ENCODE measurements at regions of chr20 and their contacts with region 1.

Region 1: GRCh38 chr20:45300961-45301360 is 5.7 kb upstream of the RBPJL start:
- DNase-seq: peak; percentile 13
- H3K4me3 ChIP-seq: no peak overlapping the region
- H3K27ac ChIP-seq: no peak overlapping the region
- H3K4me1 ChIP-seq: no peaks in the 10 kb centered on the region
- H3K27me3 ChIP-seq: peaks cover 3 to 12% of the 10 kb centered on the region in 2 experiments
- CTCF ChIP-seq: peak; percentile 33 to 58
- POLR2A ChIP-seq: no peak

Region 2: GRCh38 chr20:45117581-45117980 is 183.4 kb before region 1 on chr20:
- CTCF ChIA-PET with region 1: no interaction called
- POLR2A ChIA-PET with region 1: no interaction called
- dilution Hi-C with region 1: no loop called
- intact Hi-C with region 1: no loop called
- DNase-seq: no peak
- H3K4me3 ChIP-seq: no peak overlapping the region
- H3K27ac ChIP-seq: no peak overlapping the region
- H3K4me1 ChIP-seq: no peaks in the 10 kb centered on the region
- H3K27me3 ChIP-seq: peaks cover 2 to 4% of the 10 kb centered on the region in 2 experiments
- CTCF ChIP-seq: no peak
- POLR2A ChIP-seq: no peak

Region 3: DNA sequence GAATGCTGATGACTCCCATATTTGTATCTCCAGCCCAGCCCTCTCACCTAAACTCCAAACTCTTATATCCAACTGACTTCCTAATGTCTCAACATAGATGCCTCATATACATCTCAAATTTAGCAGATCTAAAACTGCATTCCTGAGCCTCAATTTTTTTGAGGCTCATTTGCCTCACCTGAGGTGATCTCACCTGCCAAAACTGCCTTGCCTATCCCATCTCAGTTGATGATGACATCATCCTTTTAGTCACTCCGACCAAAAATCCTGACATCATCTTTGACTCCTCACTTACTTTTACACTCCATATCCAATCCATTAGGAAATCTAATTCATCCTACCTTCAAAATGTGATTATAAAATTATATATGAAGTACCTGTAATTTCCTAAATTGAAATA is 21.0 kb before region 1 on chr20:
- CTCF ChIA-PET with region 1: no interaction called
- POLR2A ChIA-PET with region 1: no interaction called
- dilution Hi-C with region 1: no loop called
- intact Hi-C with region 1: no loop called
- DNase-seq: no peak
- H3K4me3 ChIP-seq: no peak overlapping the region
- H3K27ac ChIP-seq: no peak overlapping the region
- H3K4me1 ChIP-seq: no peaks in the 10 kb centered on the region
- H3K27me3 ChIP-seq: peaks cover 2 to 3% of the 10 kb centered on the region in 2 experiments
- CTCF ChIP-seq: no peak
- POLR2A ChIP-seq: no peak

Region 4: GRCh38 chr20:45311589-45312211 is 10.7 kb after region 1 on chr20:
- CTCF ChIA-PET with region 1: interaction called, 13 read pairs
- POLR2A ChIA-PET with region 1: no interaction called
- dilution Hi-C with region 1: no loop called
- intact Hi-C with region 1: no loop called
- DNase-seq: peak; percentile 37
- H3K4me3 ChIP-seq: no peak overlapping the region
- H3K27ac ChIP-seq: no peak overlapping the region
- H3K4me1 ChIP-seq: no peaks in the 10 kb centered on the region
- H3K27me3 ChIP-seq: peaks cover 18 to 21% of the 10 kb centered on the region in 2 experiments
- CTCF ChIP-seq: peak; percentile 84 to 97
- POLR2A ChIP-seq: no peak